Astrocyte of the cerebellum (primary cell): ENCODE measurements at regions of chr11 and their contacts with region 1.

Region 1: DNA sequence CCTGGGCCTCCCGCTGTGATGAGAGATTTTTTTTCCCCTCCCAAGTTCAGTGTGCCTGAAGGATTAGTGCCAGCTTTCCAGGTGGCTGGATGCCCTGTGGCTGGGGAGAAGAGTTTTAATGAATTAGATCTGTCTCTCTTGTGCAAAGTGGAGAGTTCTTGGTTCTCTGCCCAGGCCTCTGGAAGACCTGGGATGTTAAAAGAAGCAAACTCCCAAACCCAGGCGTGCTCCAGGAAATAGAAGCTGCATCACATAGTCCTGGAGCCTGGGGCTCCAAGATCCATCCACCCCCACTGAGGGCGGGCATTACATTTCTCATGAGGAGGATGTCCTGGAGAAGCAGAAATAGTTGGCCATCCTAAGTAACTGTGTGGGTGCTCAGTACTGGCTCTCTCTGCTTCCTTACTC is 30.6 kb downstream of the SDHAF2 start:
- DNase-seq: peak; percentile 16
- H3K4me3 ChIP-seq: no peak overlapping the region
- CTCF ChIP-seq: no peak

Region 2: DNA sequence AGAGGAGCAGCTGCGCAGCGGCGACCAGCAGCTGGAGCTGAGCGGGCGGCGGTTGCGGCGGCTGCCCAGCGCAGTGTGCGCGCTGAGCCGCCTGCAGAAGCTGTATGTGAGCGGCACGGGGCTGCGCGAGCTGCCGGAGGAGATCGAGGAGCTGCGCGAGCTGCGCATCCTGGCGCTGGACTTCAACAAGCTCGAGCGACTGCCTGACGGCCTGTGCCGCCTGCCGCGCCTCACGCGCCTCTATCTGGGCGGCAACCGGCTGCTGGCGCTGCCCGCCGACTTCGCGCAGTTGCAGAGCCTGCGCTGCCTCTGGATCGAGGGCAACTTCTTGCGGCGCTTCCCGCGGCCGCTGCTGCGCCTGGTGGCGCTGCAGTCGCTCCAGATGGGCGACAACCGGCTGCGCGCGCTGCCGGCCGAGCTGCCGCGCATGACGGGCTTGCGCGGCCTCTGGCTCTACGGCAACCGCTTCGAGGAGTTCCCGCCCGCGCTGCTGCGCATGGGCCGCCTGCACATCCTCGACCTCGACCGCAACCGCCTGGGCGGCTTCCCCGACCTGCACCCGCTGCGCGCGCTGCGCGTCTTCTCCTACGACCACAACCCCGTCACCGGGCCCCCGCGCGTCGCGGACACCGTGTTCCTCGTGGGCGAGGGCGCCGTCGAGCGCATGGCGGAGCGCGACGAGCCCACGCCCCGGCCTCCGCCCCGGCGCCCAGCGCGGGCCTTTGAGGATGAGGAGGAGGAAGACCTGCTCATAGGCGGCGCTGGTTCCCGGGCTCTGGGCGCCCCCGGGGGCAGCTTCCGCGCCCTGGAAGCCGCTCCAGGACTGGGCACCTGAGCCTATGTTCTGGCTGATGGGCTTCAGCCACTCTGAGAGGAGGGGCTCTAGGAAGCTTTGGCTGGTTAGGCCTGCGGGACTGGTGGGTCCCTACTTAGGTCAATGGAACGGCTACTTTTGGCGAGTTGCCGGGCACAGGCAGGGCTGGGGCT is 48.9 kb after region 1 on chr11:
- in situ Hi-C with region 1: loop called (anchors 5 kb)
- DNase-seq: no peak
- H3K4me3 ChIP-seq: no peak overlapping the region
- CTCF ChIP-seq: peak; percentile 18